Heart right ventricle (tissue), 16 donors: ENCODE measurements at regions of chr12 and their contacts with region 1.

Region 1: GRCh38 chr12:100279607-100280244 is 12.7 kb downstream of the SCYL2 start:
- DNase-seq: no peak
- ATAC-seq: no peak
- H3K4me3 ChIP-seq: no peak overlapping the region
- H3K27ac ChIP-seq: no peak overlapping the region
- H3K4me1 ChIP-seq: peaks cover 0 to 11% (median 6%) of the 10 kb centered on the region in 9 donors
- H3K27me3 ChIP-seq: no peaks in the 10 kb centered on the region
- CTCF ChIP-seq: no peak

Region 2: DNA sequence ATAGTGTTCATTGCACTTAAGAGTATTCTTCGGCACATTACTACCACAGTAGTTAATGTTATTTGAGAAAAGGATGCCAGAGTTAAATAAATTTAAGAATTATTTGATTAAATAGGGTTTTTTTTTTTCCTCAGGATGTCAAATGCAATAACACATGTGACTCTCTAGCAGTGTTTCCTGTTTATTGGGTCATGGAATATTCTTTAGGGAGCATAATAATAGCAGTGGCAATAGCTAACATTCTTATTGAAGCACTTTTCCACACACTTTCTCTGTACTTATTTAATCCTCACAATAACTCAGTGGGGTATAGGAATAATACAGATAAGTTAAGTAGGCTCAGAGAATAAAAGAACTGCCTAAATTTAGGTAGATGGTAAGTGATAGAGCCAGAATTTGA is 31.6 kb after region 1 on chr12:
- intact Hi-C with region 1: loop called in 1 of 10 experiments (anchors 5 kb)
- DNase-seq: no peak
- ATAC-seq: peak in 3 of 8 donors; percentile 42 to 58 (median 57)
- H3K4me3 ChIP-seq: no peak overlapping the region
- H3K27ac ChIP-seq: peak overlapping the region in 3 of 10 donors; percentile 42 to 56 (median 45)
- H3K4me1 ChIP-seq: peaks cover 0 to 19% (median 0%) of the 10 kb centered on the region in 9 donors
- H3K27me3 ChIP-seq: no peaks in the 10 kb centered on the region
- CTCF ChIP-seq: no peak

Region 3: GRCh38 chr12:100329800-100330199 is 50.1 kb after region 1 on chr12:
- intact Hi-C with region 1: loop called in 1 of 10 experiments (anchors 10 kb)
- DNase-seq: no peak
- ATAC-seq: no peak
- H3K4me3 ChIP-seq: no peak overlapping the region
- H3K27ac ChIP-seq: no peak overlapping the region
- H3K4me1 ChIP-seq: no peaks in the 10 kb centered on the region
- H3K27me3 ChIP-seq: no peaks in the 10 kb centered on the region
- CTCF ChIP-seq: no peak